ENCODE measurements at regions of chr20 and their contacts with region 1.

Region 1: DNA sequence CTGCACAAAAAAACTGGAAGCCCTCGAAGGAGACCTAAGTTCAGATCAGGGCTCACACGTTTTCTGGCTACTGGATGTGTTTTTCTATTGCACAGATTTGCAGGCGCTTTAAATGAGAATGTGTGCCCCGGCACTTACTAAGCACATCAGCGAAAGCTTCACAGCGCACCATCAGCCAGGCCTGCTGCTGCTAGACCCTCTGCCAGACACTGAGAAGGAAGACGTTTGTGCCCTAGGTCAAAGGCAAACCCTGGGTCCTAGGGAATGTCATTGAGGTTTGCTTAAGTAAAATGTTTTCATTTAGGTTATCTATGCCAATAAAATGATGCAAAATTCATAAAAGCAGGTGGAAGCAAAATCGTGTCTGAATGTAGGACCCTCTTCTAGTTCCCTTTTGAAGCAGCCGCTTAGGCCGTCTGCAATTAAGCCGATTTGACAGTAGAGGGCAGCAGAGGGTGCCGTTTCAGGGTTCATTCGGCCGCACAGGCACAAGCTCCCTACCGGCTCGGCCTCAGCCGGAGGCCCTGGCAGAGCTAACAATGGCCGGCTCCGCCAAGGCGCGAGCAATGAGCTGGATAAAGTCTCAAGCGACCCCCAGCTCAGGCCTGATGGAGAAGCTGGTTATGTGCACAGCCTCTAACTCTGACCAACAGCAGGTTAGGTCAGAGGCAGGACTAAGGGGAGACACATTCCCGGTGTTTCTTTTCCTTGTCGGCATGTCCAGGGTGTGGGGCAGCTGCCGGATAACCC is 107.2 kb upstream of the FOXA2 start:
- DNase-seq: peak; percentile 82
- H3K4me3 ChIP-seq: peak overlapping the region in 1 of 3 experiments; percentile 4
- H3K27ac ChIP-seq: no peak overlapping the region
- H3K4me1 ChIP-seq: peaks cover 6% of the 10 kb centered on the region
- H3K27me3 ChIP-seq: no peaks in the 10 kb centered on the region
- CTCF ChIP-seq: peak; percentile 83 to 87
- POLR2A ChIP-seq: no peak

Region 2: GRCh38 chr20:22333885-22334545 is 357.5 kb before region 1 on chr20:
- CTCF ChIA-PET with region 1: interaction called, 136 read pairs
- POLR2A ChIA-PET with region 1: no interaction called
- dilution Hi-C with region 1: loop called (anchors 25 kb)
- intact Hi-C with region 1: no loop called
- DNase-seq: peak; percentile 62
- H3K4me3 ChIP-seq: no peak overlapping the region
- H3K27ac ChIP-seq: no peak overlapping the region
- H3K4me1 ChIP-seq: no peaks in the 10 kb centered on the region
- H3K27me3 ChIP-seq: peaks cover 0 to 5% of the 10 kb centered on the region in 2 experiments
- CTCF ChIP-seq: peak; percentile 63 to 79
- POLR2A ChIP-seq: no peak

Region 3: DNA sequence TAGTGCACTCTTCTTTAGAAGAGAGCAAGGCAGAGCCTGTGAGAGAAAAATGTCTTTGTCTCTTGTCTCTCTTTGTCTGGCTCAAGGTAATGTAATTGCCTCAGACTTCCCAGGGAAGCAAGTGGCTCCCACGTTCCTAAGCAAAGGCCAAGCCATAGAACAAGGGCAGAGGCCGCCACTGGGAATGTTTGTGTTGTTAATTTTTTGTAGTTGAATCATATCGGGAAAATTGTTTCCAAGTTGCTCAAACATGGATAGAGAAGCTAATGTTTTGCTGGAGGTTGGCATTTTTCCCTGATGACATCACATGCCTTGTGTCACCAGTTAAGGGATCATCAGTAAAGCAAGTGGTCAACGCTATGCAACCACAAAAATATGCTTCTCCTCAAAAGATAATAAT is 104.3 kb after region 1 on chr20:
- CTCF ChIA-PET with region 1: interaction called, 21 read pairs
- POLR2A ChIA-PET with region 1: no interaction called
- dilution Hi-C with region 1: no loop called
- intact Hi-C with region 1: loop called (anchors 2 kb)
- DNase-seq: peak; percentile 98
- H3K4me3 ChIP-seq: no peak overlapping the region
- H3K27ac ChIP-seq: peak overlapping the region; percentile 100
- H3K4me1 ChIP-seq: peaks cover 43% of the 10 kb centered on the region
- H3K27me3 ChIP-seq: no peaks in the 10 kb centered on the region
- CTCF ChIP-seq: no peak
- POLR2A ChIP-seq: peak; percentile 50

Region 4: DNA sequence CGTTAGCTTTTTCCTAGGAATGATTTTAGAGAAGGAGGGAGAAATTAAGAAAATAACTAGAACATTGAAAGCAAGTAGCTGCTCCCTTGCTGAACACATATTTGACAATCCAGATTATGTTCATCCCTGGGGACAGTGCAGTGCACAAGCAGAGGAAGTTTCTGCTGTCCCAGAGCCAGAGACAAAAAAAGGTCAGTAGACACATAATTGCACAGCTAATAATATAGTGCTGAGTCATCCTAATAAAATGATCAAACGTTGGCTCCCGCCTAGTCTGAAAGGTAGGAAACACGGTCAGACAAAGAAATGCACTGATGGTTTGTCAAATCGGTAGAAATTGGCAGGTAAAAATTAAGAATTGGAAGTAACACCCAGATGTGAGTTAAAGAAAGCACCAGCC is 321.9 kb after region 1 on chr20:
- CTCF ChIA-PET with region 1: interaction called, 13 read pairs
- POLR2A ChIA-PET with region 1: no interaction called
- dilution Hi-C with region 1: no loop called
- intact Hi-C with region 1: no loop called
- DNase-seq: no peak
- H3K4me3 ChIP-seq: no peak overlapping the region
- H3K27ac ChIP-seq: no peak overlapping the region
- H3K4me1 ChIP-seq: no peaks in the 10 kb centered on the region
- H3K27me3 ChIP-seq: no peaks in the 10 kb centered on the region
- CTCF ChIP-seq: no peak
- POLR2A ChIP-seq: no peak

Region 5: DNA sequence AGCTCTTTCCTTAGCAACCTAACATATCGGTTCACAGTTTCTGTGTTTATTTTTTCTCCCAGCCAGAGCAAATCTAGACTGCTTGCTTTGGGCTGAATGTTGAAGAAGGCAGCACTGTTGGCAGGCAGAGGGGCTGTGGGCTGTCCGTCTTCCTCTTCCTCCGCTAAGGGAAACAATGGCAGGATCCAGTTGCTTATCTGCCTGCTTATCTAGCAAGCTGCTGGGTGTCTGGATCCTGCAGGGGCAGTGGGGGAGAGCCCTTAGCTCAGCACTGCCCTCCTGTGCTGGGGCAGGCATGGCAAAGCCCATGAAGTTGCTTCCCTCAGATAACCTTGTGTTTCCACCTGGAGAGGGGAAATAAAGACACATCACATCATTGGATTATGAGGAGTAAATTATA is 487.3 kb after region 1 on chr20:
- CTCF ChIA-PET with region 1: interaction called, 10 read pairs
- POLR2A ChIA-PET with region 1: no interaction called
- dilution Hi-C with region 1: no loop called
- intact Hi-C with region 1: no loop called
- DNase-seq: peak; percentile 96
- H3K4me3 ChIP-seq: no peak overlapping the region
- H3K27ac ChIP-seq: peak overlapping the region; percentile 56
- H3K4me1 ChIP-seq: peaks cover 21% of the 10 kb centered on the region
- H3K27me3 ChIP-seq: peaks cover 0 to 2% of the 10 kb centered on the region in 2 experiments
- CTCF ChIP-seq: peak; percentile 43 to 80
- POLR2A ChIP-seq: peak; percentile 49

Region 6: DNA sequence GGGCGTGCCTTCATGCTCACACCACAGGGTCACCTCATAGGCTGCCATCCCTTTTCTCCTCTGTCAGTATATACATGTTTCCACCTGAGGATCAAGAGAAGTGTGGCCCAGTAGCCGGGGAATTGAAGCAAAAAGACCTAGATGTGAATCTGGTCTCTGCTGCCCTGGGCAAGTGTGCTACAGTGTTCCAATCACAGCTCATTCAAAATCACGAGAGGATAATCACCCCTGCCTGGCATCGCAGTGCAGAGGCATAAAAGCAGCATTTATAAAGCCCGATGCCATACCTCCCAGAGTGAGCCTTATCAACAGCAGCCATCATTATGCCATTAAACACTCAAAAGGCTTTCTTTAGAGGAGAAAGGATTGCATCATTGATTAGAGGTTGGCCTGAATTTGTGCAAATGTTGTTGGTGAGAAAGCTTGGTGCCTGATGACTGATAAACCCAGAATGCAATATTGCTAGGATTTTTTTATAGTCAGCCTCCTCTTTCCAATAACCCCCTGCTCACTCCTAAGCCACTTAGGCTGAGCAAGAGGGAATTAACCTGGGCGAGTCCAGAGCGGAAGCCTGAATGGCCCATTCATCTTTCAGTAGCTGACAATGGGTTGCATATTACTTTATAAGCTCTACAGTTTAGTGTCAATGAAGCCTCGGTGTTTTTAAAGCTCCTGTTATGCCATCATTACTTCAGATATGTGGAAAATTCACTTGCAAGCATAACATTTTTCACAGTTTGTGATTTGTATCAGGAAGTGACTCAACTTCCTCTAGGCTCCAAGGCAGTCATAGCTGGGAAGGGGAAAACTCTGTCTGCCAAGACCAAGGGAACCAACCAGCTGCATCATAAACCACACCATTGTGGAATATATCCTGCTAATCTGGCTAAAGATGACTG is 566.6 kb after region 1 on chr20:
- CTCF ChIA-PET with region 1: interaction called, 11 read pairs
- POLR2A ChIA-PET with region 1: no interaction called
- dilution Hi-C with region 1: no loop called
- intact Hi-C with region 1: no loop called
- DNase-seq: peak; percentile 97
- H3K4me3 ChIP-seq: no peak overlapping the region
- H3K27ac ChIP-seq: peak overlapping the region; percentile 98
- H3K4me1 ChIP-seq: peaks cover 39% of the 10 kb centered on the region
- H3K27me3 ChIP-seq: no peaks in the 10 kb centered on the region
- CTCF ChIP-seq: no peak
- POLR2A ChIP-seq: peak; percentile 25

Region 7: DNA sequence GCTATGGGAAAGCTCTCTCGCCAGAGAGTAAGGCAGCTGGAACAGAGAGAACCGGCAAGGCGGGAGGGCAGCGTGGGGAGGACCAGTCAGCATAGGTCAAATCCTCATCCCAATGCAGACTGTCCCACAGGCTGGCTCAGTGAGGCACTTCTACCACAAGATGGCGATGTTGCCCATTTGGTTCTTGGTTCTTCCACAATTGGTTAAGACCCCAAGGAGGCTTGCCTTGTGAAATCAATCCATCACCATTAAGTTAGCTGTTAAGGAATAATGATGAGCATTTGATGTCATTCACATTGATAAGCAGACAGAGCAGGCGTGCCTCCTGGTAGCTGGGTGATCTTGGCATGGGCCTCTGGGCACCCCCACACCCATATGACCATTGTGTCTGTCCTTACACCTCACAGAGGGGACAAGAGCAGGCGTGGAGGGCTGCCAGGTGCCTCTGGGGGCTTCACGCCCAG is 750.3 kb after region 1 on chr20:
- CTCF ChIA-PET with region 1: interaction called, 8 read pairs
- POLR2A ChIA-PET with region 1: no interaction called
- dilution Hi-C with region 1: no loop called
- intact Hi-C with region 1: loop called (anchors 1 kb)
- DNase-seq: peak; percentile 77
- H3K4me3 ChIP-seq: no peak overlapping the region
- H3K27ac ChIP-seq: no peak overlapping the region
- H3K4me1 ChIP-seq: no peaks in the 10 kb centered on the region
- H3K27me3 ChIP-seq: no peaks in the 10 kb centered on the region
- CTCF ChIP-seq: peak; percentile 80 to 90
- POLR2A ChIP-seq: no peak

Measured in endothelial cell of umbilical vein (primary cell).